Activated CD8-positive, alpha-beta T cell treated with anti-CD3 and anti-CD28 coated beads, Interleukin-2, amount 10 ng/mL, durations not matched to agents 7 days and 5 days (primary cell): ENCODE measurements at regions of chr1 and their contacts with region 1.

Region 1: GRCh38 chr1:59699227-59699847 is 115.4 kb upstream of the HOOK1 start:
- DNase-seq: peak; percentile 37
- ATAC-seq: peak; percentile 34
- H3K4me3 Mint-ChIP-seq: no peak overlapping the region
- H3K27ac Mint-ChIP-seq: no peak overlapping the region
- H3K4me1 Mint-ChIP-seq: peaks cover 31% of the 10 kb centered on the region
- H3K27me3 Mint-ChIP-seq: no peaks in the 10 kb centered on the region

Region 2: DNA sequence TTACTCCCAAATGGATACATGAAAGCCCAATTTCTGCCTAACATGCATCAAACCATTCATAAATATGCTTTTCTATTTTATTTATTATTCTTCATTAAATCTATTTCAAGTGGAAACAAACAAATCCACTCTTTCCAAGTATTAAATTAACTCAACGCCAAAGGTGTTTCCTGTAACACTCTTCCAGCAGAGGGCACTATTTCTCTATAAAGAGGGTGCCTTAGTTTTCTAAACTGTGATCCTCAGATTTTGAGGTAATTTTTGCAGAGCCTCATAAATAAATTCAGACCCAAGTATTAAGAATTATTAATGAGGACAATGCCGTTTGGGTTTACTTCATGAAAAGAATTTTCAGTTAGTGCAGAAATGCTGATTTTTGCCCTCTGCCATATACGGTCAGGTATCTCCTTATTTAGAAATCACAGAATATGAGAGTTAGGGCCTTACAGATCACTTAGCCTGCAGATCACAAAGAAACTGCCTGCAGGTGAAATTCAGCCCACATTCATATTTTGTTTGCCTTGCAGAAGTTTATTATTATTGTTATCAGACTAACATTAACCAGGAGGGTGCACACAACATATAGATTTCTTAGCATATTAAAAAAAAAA is 959.4 kb before region 1 on chr1:
- CTCF ChIA-PET with region 1: interaction called, 25 read pairs
- POLR2A ChIA-PET with region 1: no interaction called
- DNase-seq: peak; percentile 53
- ATAC-seq: peak; percentile 55
- H3K4me3 Mint-ChIP-seq: no peak overlapping the region
- H3K27ac Mint-ChIP-seq: no peak overlapping the region
- H3K4me1 Mint-ChIP-seq: peaks cover 14% of the 10 kb centered on the region
- H3K27me3 Mint-ChIP-seq: peaks cover 8% of the 10 kb centered on the region

Region 3: GRCh38 chr1:59046730-59047157 is 652.6 kb before region 1 on chr1:
- CTCF ChIA-PET with region 1: interaction called, 18 read pairs
- POLR2A ChIA-PET with region 1: no interaction called
- DNase-seq: peak; percentile 75
- ATAC-seq: peak; percentile 90
- H3K4me3 Mint-ChIP-seq: peak overlapping the region; percentile 49
- H3K27ac Mint-ChIP-seq: peak overlapping the region; percentile 86
- H3K4me1 Mint-ChIP-seq: peaks cover 49% of the 10 kb centered on the region
- H3K27me3 Mint-ChIP-seq: no peaks in the 10 kb centered on the region

Region 4: GRCh38 chr1:59309795-59310548 is 389.4 kb before region 1 on chr1:
- CTCF ChIA-PET with region 1: interaction called, 12 read pairs
- POLR2A ChIA-PET with region 1: no interaction called
- DNase-seq: no peak
- ATAC-seq: no peak
- H3K4me3 Mint-ChIP-seq: no peak overlapping the region
- H3K27ac Mint-ChIP-seq: no peak overlapping the region
- H3K4me1 Mint-ChIP-seq: peaks cover 35% of the 10 kb centered on the region
- H3K27me3 Mint-ChIP-seq: no peaks in the 10 kb centered on the region

Region 5: DNA sequence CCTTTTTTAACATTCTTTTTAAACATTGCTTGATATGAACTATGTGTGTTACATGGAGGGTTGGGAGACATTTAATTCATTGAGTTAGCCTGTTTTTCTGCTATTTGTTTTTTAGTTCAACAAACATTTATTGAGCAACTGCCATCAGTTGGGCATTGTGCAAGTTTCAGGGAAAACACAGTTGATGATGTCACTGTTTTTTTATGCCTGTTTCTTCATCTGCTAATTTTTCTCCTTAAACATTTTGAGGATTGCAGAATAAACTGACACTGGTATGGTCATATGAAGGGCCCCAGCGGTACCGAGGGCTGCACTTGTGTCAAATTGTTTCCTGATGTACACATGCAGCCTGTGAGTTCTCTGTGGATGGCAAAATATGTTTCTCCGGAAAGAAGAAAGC is 149.4 kb before region 1 on chr1:
- CTCF ChIA-PET with region 1: no interaction called
- POLR2A ChIA-PET with region 1: no interaction called
- DNase-seq: no peak
- ATAC-seq: no peak
- H3K4me3 Mint-ChIP-seq: no peak overlapping the region
- H3K27ac Mint-ChIP-seq: no peak overlapping the region
- H3K4me1 Mint-ChIP-seq: peaks cover 1% of the 10 kb centered on the region
- H3K27me3 Mint-ChIP-seq: no peaks in the 10 kb centered on the region

Region 6: DNA sequence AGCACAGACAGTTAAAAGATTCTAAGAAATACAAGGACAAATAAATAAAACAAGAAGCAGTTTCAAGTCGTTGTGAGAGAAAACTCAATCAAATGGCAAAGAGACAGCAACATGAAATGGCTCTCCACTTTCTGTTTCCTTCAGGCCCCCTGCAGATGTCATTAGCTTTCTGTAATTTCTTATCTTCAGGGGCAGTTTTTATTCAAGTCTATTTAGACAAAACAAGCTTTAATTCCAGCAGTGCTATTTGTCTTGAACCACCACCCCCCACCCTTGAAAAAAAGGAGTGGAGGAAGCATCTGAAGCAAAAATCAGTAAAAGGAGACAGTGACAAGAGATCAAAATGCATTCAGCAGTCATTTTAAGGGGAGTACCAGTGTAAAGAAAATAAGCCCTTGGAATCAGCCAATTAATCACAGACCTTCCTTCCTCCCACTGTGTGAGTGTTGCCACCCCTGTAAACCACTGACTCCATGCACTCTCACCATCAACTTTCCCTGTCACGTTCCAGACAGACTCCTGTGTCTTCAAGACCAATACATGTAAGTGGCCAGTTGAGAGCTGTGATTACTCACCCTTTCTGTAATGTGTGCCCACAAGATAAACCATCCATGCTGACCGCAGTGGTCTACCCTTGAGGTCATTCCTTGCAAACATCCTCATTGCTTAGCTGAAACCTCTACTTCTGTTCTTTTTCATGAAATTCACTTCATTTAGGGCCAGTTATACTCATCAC is 20.7 kb before region 1 on chr1:
- CTCF ChIA-PET with region 1: interaction called, 10 read pairs
- POLR2A ChIA-PET with region 1: no interaction called
- DNase-seq: no peak
- ATAC-seq: no peak
- H3K4me3 Mint-ChIP-seq: no peak overlapping the region
- H3K27ac Mint-ChIP-seq: no peak overlapping the region
- H3K4me1 Mint-ChIP-seq: no peaks in the 10 kb centered on the region
- H3K27me3 Mint-ChIP-seq: no peaks in the 10 kb centered on the region

Region 7: DNA sequence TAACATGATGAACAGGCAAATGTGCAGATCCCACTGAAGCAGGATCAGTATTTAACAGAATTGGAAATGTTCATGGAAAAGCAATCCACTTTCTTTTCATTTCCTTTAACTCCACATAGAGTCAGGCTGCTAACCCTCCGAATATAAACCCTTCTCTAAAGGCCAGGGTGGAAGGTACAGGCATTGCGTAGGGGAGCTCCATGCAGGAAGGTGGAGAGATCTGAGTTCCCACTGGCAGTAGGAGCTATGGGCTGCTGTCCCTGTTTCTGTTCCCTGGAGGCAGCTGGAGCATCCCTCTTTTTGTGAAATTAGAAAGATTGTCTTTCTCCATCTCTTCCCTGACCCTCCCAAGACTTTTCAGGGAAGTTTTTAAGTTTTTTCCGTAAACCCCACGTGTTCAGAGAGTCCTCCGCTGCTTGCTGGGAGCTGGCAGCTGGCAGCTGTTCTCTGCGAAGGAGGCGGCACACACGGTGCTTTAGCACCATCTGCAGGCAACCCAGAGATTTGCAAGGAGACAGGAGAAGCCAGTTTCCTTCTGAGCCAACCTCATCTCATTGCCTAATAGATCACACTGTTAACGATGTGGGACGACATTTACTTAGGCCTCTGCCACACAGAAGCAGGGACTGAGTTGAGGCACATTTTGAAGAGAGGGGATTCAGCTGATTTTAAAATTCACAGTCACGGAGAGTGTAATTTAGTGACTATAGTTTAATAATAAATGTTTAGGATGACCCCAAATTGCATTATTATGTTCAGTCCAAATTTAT is 60.0 kb after region 1 on chr1:
- CTCF ChIA-PET with region 1: interaction called, 46 read pairs
- POLR2A ChIA-PET with region 1: no interaction called
- DNase-seq: peak; percentile 78
- ATAC-seq: peak; percentile 85
- H3K4me3 Mint-ChIP-seq: no peak overlapping the region
- H3K27ac Mint-ChIP-seq: no peak overlapping the region
- H3K4me1 Mint-ChIP-seq: peaks cover 4% of the 10 kb centered on the region
- H3K27me3 Mint-ChIP-seq: no peaks in the 10 kb centered on the region